Prostate gland (tissue), 2 donors: ENCODE measurements at regions of chr2 and their contacts with region 1.

Region 1: DNA sequence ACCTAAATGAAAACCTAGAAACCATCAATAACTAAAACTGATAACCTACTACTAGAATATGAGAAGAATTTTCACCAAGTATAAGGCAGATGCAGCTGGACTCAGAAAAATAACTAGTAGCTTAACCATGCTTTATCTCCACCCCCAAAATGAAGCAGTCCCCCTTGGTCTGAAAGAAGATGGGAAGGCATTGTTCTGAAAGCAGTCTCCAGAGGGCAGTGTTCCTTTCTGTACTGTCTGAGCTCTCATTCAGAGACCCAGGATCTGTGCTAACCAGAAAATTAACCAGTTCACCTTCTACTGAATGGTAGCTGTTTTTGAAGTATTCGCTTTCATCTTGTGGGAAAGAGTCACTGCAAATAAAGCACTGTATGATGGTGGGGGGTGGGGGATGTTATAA is 273.0 kb downstream of the PDE11A start:
- DNase-seq: no peak
- H3K4me3 ChIP-seq: no peak overlapping the region
- H3K27ac ChIP-seq: no peak overlapping the region
- H3K4me1 ChIP-seq: peaks cover 4% of the 10 kb centered on the region
- H3K27me3 ChIP-seq: no peaks in the 10 kb centered on the region
- CTCF ChIP-seq: peak in 3 of 4 experiments; percentile 25 to 42 (median 33)
- POLR2A ChIP-seq: no peak

Region 2: DNA sequence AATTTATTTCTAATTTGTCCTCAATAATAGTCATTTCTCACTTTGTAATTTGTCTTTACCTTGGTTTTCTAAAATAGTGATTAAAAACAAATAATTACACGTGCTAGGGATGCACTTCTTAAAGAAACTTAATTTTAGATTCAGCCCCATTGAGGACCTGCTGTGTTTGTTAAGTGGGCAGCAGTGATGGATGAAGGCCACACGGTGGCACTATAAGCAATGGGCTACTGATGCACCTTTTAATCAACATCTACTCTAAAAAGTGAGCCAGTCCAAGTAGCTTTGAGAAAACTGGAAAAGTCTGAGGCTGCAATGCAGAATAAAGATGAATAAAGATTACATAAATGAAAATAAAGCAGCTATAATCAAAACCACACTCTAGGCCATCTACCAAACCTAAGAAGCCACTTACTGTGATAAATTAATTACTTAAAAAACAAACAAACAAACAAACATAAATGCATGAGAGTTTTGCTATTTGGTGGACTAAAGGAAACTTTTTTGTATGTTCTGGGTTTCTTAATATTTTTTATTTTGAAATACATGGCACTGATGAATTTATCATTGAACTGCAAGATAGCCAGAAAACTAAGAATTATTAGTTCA is 183.8 kb after region 1 on chr2:
- intact Hi-C with region 1: loop called (anchors 10 kb)
- DNase-seq: no peak
- H3K4me3 ChIP-seq: no peak overlapping the region
- H3K27ac ChIP-seq: no peak overlapping the region
- H3K4me1 ChIP-seq: no peaks in the 10 kb centered on the region
- H3K27me3 ChIP-seq: no peaks in the 10 kb centered on the region
- CTCF ChIP-seq: peak in 3 of 4 experiments; percentile 30 to 57 (median 55)
- POLR2A ChIP-seq: no peak

Region 3: GRCh38 chr2:178072383-178073301 is 273.1 kb after region 1 on chr2 and contains the start of gene PDE11A:
- intact Hi-C with region 1: loop called (anchors 10 kb)
- DNase-seq: peak; percentile 92
- H3K4me3 ChIP-seq: peak within 1 kb of the TSS; percentile 24 to 43
- H3K27ac ChIP-seq: peak within 1 kb of the TSS; percentile 64 to 73
- H3K4me1 ChIP-seq: no peaks in the 10 kb centered on the region
- H3K27me3 ChIP-seq: no peaks in the 10 kb centered on the region
- CTCF ChIP-seq: no peak
- POLR2A ChIP-seq: peak; percentile 54
- total RNA-seq, gene PDE11A: 14.9 to 26.6 TPM